CD4-positive, alpha-beta T cell (primary cell): ENCODE measurements at regions of chr5 and their contacts with region 1.

Region 1: GRCh38 chr5:115246361-115246991 is 16.2 kb downstream of the PGGT1B start:
- DNase-seq: peak in 3 of 14 experiments; percentile 40 to 53 (median 53)
- ATAC-seq: peak; percentile 60
- H3K4me3 ChIP-seq: no peak overlapping the region
- H3K4me3 Mint-ChIP-seq: no peak overlapping the region
- H3K27ac ChIP-seq: no peak overlapping the region
- H3K27ac Mint-ChIP-seq: no peak overlapping the region
- H3K4me1 ChIP-seq: no peaks in the 10 kb centered on the region
- H3K4me1 Mint-ChIP-seq: peaks cover 11% of the 10 kb centered on the region
- H3K27me3 ChIP-seq: no peaks in the 10 kb centered on the region
- H3K27me3 Mint-ChIP-seq: no peaks in the 10 kb centered on the region
- CTCF ChIP-seq: peak; percentile 76

Region 2: GRCh38 chr5:113330533-113331208 is 1915.8 kb before region 1 on chr5:
- CTCF ChIA-PET with region 1: no interaction called
- POLR2A ChIA-PET with region 1: no interaction called
- intact Hi-C with region 1: loop called in 1 of 2 experiments (anchors 10 kb)
- DNase-seq: peak in 4 of 14 experiments; percentile 14 to 78 (median 77)
- ATAC-seq: peak; percentile 90
- H3K4me3 ChIP-seq: no peak overlapping the region
- H3K4me3 Mint-ChIP-seq: no peak overlapping the region
- H3K27ac ChIP-seq: no peak overlapping the region
- H3K27ac Mint-ChIP-seq: peak overlapping the region; percentile 60
- H3K4me1 ChIP-seq: no peaks in the 10 kb centered on the region
- H3K4me1 Mint-ChIP-seq: peaks cover 21% of the 10 kb centered on the region
- H3K27me3 ChIP-seq: no peaks in the 10 kb centered on the region
- H3K27me3 Mint-ChIP-seq: no peaks in the 10 kb centered on the region
- CTCF ChIP-seq: peak; percentile 76

Region 3: DNA sequence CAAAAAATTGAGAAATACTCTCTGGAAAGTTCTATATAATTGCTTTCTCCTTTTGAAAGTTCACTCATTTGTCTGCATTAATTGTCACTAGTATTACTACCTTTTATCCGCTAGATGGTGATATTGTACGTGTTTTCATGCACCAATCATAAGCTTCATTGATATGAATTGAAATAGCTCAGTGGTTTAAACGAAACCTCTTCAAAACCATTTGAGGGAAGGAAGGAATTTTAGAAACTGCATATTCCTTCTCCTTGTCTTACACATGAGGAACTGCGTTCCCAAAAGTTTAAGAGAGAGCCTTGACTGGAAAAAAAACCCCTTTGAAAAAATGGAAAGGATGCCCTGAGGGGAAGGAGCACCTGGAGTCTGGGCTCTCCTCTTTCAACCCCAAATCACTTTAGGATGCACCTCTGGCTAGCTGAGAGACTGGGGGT is 1634.4 kb before region 1 on chr5:
- CTCF ChIA-PET with region 1: interaction called, 3 read pairs
- POLR2A ChIA-PET with region 1: no interaction called
- intact Hi-C with region 1: loop called (anchors 1 to 2 kb)
- DNase-seq: peak in 3 of 14 experiments; percentile 43 to 58 (median 58)
- ATAC-seq: peak; percentile 80
- H3K4me3 ChIP-seq: no peak overlapping the region
- H3K4me3 Mint-ChIP-seq: no peak overlapping the region
- H3K27ac ChIP-seq: no peak overlapping the region
- H3K27ac Mint-ChIP-seq: no peak overlapping the region
- H3K4me1 ChIP-seq: peaks cover 3% of the 10 kb centered on the region
- H3K4me1 Mint-ChIP-seq: peaks cover 5% of the 10 kb centered on the region
- H3K27me3 ChIP-seq: peaks cover 0 to 3% of the 10 kb centered on the region in 2 experiments
- H3K27me3 Mint-ChIP-seq: peaks cover 32% of the 10 kb centered on the region
- CTCF ChIP-seq: peak; percentile 72

Region 4: GRCh38 chr5:113678924-113679575 is 1567.4 kb before region 1 on chr5:
- CTCF ChIA-PET with region 1: no interaction called
- POLR2A ChIA-PET with region 1: no interaction called
- intact Hi-C with region 1: loop called (anchors 2 to 10 kb)
- DNase-seq: peak in 3 of 14 experiments; percentile 22 to 38 (median 28)
- ATAC-seq: no peak
- H3K4me3 ChIP-seq: no peak overlapping the region
- H3K4me3 Mint-ChIP-seq: no peak overlapping the region
- H3K27ac ChIP-seq: no peak overlapping the region
- H3K27ac Mint-ChIP-seq: no peak overlapping the region
- H3K4me1 ChIP-seq: no peaks in the 10 kb centered on the region
- H3K4me1 Mint-ChIP-seq: no peaks in the 10 kb centered on the region
- H3K27me3 ChIP-seq: no peaks in the 10 kb centered on the region
- H3K27me3 Mint-ChIP-seq: peaks cover 11% of the 10 kb centered on the region
- CTCF ChIP-seq: peak; percentile 9

Region 5: DNA sequence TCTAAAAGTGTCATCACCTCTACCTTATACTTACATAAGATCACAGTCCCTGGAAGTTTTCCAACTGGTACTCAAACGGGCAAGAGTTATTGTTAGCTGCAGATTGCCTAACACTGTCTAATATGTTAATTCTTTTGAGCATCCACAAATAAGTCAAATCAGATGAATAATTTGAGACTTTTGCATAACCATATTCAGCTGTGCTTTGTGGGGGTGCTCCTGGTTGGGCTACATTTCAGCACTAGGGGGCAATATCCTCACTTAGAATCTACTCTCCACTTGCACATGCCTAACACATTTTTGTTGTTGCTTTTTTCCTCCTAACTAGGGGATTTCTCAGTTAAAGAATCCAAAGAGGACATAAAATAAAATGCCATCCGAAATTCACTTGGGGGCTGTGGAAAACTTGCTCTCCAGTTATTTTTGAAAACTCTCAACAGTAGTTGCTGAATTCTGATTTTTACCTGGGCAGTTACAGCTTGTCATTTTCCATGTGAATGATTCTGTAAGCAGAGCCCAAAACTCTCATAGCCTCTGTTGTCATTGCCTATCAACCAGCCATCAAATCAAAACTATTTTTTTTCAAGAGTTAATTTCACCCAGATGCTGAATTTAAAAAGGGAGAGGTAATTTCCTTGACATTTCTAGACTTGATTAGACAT is 148.3 kb before region 1 on chr5:
- CTCF ChIA-PET with region 1: interaction called, 4 read pairs
- POLR2A ChIA-PET with region 1: no interaction called
- intact Hi-C with region 1: loop called (anchors 1 kb)
- DNase-seq: peak in 7 of 14 experiments; percentile 1 to 56 (median 8)
- ATAC-seq: peak; percentile 54
- H3K4me3 ChIP-seq: no peak overlapping the region
- H3K4me3 Mint-ChIP-seq: no peak overlapping the region
- H3K27ac ChIP-seq: no peak overlapping the region
- H3K27ac Mint-ChIP-seq: no peak overlapping the region
- H3K4me1 ChIP-seq: no peaks in the 10 kb centered on the region
- H3K4me1 Mint-ChIP-seq: no peaks in the 10 kb centered on the region
- H3K27me3 ChIP-seq: peaks cover 2 to 7% of the 10 kb centered on the region in 2 experiments
- H3K27me3 Mint-ChIP-seq: peaks cover 28% of the 10 kb centered on the region
- CTCF ChIP-seq: peak; percentile 63